CD14-positive monocyte (primary cell): ENCODE measurements at regions of chr14 and their contacts with region 1.

Region 1: DNA sequence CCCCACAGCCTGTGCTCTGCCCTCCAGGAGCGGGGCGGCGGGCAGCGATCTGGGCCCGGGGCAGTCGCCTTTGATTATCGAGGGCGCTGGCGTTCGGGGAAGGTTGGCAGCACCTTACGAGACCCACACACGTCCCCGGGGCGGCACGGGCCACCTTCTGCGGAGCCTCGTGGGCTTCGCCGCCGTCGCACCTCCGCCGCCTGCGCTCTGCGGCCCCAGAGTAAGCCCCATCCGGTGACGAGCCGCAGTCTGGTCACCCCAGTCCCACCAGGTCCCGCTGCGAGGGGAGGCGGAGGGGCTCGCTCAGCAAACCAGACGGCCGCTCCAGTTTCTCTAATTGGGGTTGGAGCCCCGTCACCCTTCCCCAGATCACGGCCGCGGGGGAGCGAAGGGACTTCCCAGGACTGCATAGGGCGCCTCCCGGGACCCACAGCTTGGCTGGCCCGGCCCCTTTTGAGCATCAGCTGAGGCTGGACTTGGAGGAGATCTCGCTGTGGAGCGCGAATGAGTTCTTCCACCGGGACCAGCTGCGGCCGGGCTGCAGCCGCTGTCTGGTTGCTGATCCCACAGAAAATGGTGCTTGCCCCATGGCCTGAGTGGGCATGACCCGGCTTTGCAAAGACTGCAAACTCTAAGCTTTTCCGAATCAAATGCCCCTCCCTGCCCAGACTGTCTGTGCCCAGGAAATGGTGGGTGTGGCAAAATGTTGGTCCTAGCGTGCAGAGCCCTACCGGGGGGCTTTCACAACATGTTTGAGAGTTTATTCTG is 560 bp downstream of the LGALS3 start:
- DNase-seq: peak; percentile 72 to 86 (median 76)
- H3K4me3 ChIP-seq: peak overlapping the region; percentile 64 to 88 (median 69)
- H3K4me3 Mint-ChIP-seq: peak overlapping the region; percentile 91 to 92
- H3K27ac ChIP-seq: peak overlapping the region; percentile 59 to 93
- H3K27ac Mint-ChIP-seq: peak overlapping the region; percentile 85 to 96 (median 93)
- H3K4me1 ChIP-seq: peaks cover 67 to 81% of the 10 kb centered on the region in 2 donors
- H3K4me1 Mint-ChIP-seq: peaks cover 82% of the 10 kb centered on the region
- H3K27me3 ChIP-seq: no peaks in the 10 kb centered on the region
- H3K27me3 Mint-ChIP-seq: peaks cover 0 to 2% (median 0%) of the 10 kb centered on the region in 3 donors
- CTCF ChIP-seq: no peak

Region 2: DNA sequence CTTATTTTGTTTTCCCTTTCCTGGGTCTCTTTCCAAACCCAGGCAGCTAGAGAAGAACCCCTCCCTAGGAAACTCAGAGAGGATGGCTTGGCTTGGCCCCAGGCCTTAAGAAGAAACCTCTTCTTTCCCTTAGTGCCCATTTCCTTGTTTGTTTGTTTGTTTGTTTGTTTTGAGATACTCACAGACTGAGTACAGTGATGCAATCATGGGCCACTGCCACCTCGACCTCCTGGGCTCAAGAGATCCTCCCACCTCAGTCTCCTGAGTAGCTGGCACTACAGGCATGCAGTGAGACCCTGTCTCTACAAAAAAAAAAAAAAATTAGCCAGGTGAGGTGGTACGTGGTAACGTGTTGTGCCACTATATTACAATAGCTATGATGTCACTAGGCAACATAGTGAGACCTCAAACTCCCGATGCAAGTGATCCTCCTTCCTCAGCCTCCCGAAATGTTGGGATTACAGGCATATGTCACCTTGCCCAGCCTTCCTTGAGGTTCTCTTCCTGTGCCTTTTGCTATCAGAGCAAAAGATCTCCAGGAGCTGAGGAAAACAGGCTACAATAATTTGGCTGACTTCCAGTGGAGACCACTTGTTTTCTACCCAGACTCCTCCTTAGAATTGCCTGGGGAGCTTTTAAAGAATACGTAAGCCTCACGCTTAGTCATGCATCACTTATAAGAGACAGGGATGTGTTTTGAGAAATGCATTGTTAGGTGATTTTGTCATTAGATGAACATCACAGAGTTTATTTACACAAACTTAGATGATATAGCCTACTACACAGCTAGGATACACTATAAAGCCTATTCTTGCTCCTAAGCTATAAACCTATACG is 35.1 kb before region 1 on chr14:
- intact Hi-C with region 1: loop called (anchors 5 kb)
- DNase-seq: no peak
- H3K4me3 ChIP-seq: no peak overlapping the region
- H3K4me3 Mint-ChIP-seq: no peak overlapping the region
- H3K27ac ChIP-seq: no peak overlapping the region
- H3K27ac Mint-ChIP-seq: peak overlapping the region in 2 of 7 donors; percentile 11 to 35
- H3K4me1 ChIP-seq: peaks cover 23 to 26% of the 10 kb centered on the region in 2 donors
- H3K4me1 Mint-ChIP-seq: peaks cover 22% of the 10 kb centered on the region
- H3K27me3 ChIP-seq: no peaks in the 10 kb centered on the region
- H3K27me3 Mint-ChIP-seq: peaks cover 0 to 2% (median 2%) of the 10 kb centered on the region in 3 donors
- CTCF ChIP-seq: no peak

Region 3: GRCh38 chr14:55316567-55316966 is 187.0 kb after region 1 on chr14:
- intact Hi-C with region 1: no loop called
- DNase-seq: no peak
- H3K4me3 ChIP-seq: no peak overlapping the region
- H3K4me3 Mint-ChIP-seq: no peak overlapping the region
- H3K27ac ChIP-seq: no peak overlapping the region
- H3K27ac Mint-ChIP-seq: peak overlapping the region in 3 of 7 donors; percentile 36 to 83 (median 80)
- H3K4me1 ChIP-seq: no peaks in the 10 kb centered on the region
- H3K4me1 Mint-ChIP-seq: no peaks in the 10 kb centered on the region
- H3K27me3 ChIP-seq: no peaks in the 10 kb centered on the region
- H3K27me3 Mint-ChIP-seq: peaks cover 0 to under 1% (median 0%) of the 10 kb centered on the region in 3 donors
- CTCF ChIP-seq: no peak